ENCODE measurements at regions of chr14 and their contacts with region 1.

Region 1: GRCh38 chr14:90758028-90758889 is 58.0 kb downstream of the TTC7B start:
- DNase-seq: peak; percentile 90 to 96
- ATAC-seq: peak; percentile 88 to 94 (median 92)
- H3K4me3 ChIP-seq: peak overlapping the region; percentile 39 to 66 (median 60)
- H3K27ac ChIP-seq: peak overlapping the region; percentile 91 to 98 (median 94)
- H3K4me1 ChIP-seq: peaks cover 4 to 34% (median 24%) of the 10 kb centered on the region in 9 donors
- H3K27me3 ChIP-seq: no peaks in the 10 kb centered on the region
- CTCF ChIP-seq: peak; percentile 70 to 98 (median 94)

Region 2: GRCh38 chr14:90301668-90302090 is 456.6 kb before region 1 on chr14:
- intact Hi-C with region 1: loop called in 7 of 10 experiments (anchors 5 to 10 kb)
- DNase-seq: no peak
- ATAC-seq: peak in 7 of 8 donors; percentile 37 to 84 (median 70)
- H3K4me3 ChIP-seq: no peak overlapping the region
- H3K27ac ChIP-seq: peak overlapping the region in 9 of 10 donors; percentile 4 to 74 (median 56)
- H3K4me1 ChIP-seq: peaks cover 5 to 45% (median 22%) of the 10 kb centered on the region in 9 donors
- H3K27me3 ChIP-seq: no peaks in the 10 kb centered on the region
- CTCF ChIP-seq: peak; percentile 20 to 75 (median 58)

Region 3: GRCh38 chr14:90456551-90456950 is 301.7 kb before region 1 on chr14:
- intact Hi-C with region 1: no loop called
- DNase-seq: no peak
- ATAC-seq: no peak
- H3K4me3 ChIP-seq: no peak overlapping the region
- H3K27ac ChIP-seq: no peak overlapping the region
- H3K4me1 ChIP-seq: peaks cover 0 to 33% (median 21%) of the 10 kb centered on the region in 9 donors
- H3K27me3 ChIP-seq: no peaks in the 10 kb centered on the region
- CTCF ChIP-seq: no peak

Region 4: GRCh38 chr14:90697577-90698206 is 60.6 kb before region 1 on chr14:
- intact Hi-C with region 1: loop called in 4 of 10 experiments (anchors 1 to 5 kb)
- DNase-seq: peak; percentile 82 to 89
- ATAC-seq: peak; percentile 81 to 97 (median 92)
- H3K4me3 ChIP-seq: peak overlapping the region in 2 of 10 donors; percentile 7 to 35
- H3K27ac ChIP-seq: peak overlapping the region; percentile 33 to 88 (median 73)
- H3K4me1 ChIP-seq: peaks cover 13 to 47% (median 40%) of the 10 kb centered on the region in 9 donors
- H3K27me3 ChIP-seq: no peaks in the 10 kb centered on the region
- CTCF ChIP-seq: peak; percentile 93 to 98 (median 97)

Region 5: GRCh38 chr14:90791486-90791885 is 33.2 kb after region 1 on chr14:
- intact Hi-C with region 1: no loop called
- DNase-seq: no peak
- ATAC-seq: peak in 5 of 8 donors; percentile 11 to 63 (median 23)
- H3K4me3 ChIP-seq: no peak overlapping the region
- H3K27ac ChIP-seq: no peak overlapping the region
- H3K4me1 ChIP-seq: peaks cover 0 to 22% (median 9%) of the 10 kb centered on the region in 9 donors
- H3K27me3 ChIP-seq: no peaks in the 10 kb centered on the region
- CTCF ChIP-seq: no peak

Region 6: DNA sequence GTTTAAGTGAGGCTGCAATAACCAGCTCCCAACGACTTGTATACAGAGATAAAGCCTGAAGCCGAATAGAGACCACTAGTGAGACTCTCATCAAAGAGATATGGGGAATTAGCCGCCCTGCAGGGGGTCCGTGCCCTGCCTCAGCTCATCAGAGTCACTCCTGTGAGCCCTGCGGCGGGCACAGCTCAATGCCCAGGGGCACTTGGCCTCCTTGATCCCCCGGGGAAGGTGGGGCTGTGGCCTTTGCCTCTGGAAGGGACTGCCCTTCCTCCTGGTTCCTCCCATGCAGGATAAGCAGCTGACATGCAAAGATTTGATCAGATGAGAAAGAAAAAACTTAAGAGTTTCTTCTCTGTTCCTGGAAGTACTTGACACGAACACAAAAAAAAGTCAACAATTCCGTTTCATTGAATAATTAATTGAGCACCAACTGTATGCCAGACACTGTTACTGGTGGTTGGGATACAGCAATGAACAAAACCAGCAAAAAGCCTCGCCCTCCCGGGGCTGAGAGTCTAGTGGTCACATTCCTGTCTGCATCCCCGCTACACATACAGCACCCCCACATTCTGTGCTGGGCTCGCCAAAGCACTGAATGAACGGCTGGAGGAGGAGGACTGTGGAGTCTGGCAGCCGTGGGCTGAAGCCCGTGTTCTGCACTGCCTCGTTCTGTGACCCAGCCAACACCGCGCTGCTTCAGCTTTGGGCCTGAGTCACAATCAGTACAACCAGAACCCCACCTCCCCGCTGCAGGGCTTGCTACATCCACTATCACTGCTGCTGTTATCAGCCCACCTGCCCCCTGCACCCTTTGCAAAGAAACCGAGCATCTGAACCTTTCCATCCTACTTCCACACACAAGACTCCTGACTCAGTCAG is 47.6 kb after region 1 on chr14:
- intact Hi-C with region 1: loop called in 3 of 10 experiments (anchors 5 kb)
- DNase-seq: no peak
- ATAC-seq: peak in 6 of 8 donors; percentile 20 to 50 (median 43)
- H3K4me3 ChIP-seq: no peak overlapping the region
- H3K27ac ChIP-seq: peak overlapping the region in 3 of 10 donors; percentile 27 to 63 (median 33)
- H3K4me1 ChIP-seq: peaks cover 0 to 83% (median 60%) of the 10 kb centered on the region in 9 donors
- H3K27me3 ChIP-seq: no peaks in the 10 kb centered on the region
- CTCF ChIP-seq: no peak

Region 7: DNA sequence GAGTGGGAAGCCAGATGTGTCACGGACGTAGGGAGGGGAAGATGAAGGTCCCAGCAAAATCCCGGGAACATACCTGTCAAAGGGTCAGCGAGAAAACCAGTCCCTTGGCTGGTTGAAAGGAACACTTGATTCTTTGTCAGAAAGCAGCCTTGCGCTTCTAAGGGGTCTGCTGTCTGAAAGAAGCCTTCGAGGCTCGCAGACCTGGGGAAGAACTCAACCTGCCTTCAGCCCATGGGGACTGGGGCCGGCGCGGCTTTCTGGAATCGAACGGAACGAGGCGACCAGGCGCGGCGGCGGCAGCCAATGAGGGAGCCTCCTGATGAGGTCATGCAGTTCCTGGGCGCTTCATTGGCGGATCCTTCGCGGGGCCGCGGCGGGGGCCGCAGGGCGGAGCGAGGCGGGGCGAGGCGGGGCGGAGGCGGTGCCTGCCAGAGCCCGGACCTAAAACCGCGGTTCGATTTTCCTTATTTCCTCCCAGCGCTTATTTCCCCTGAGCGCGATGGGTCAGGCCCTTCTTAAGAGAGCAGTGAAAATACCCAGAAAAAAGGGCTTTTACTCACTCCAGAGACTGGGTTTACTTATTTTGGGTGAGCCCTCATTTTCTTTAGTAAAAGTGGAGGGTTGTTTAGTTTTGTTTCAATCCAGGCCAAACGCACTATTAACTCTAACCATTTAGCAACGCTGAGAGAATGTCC is 69.8 kb after region 1 on chr14:
- intact Hi-C with region 1: loop called in 1 of 10 experiments (anchors 2 kb)
- DNase-seq: peak; percentile 94 to 95
- ATAC-seq: peak; percentile 98 to 100 (median 100)
- H3K4me3 ChIP-seq: peak overlapping the region in 9 of 10 donors; percentile 20 to 51 (median 45)
- H3K27ac ChIP-seq: peak overlapping the region in 9 of 10 donors; percentile 75 to 91 (median 84)
- H3K4me1 ChIP-seq: peaks cover 7 to 21% (median 14%) of the 10 kb centered on the region in 9 donors
- H3K27me3 ChIP-seq: no peaks in the 10 kb centered on the region
- CTCF ChIP-seq: no peak

Measured in heart right ventricle (tissue), 16 donors.